Activated B cell treated with CpG ODN at 0.5 μM for 24 hours (primary cell): ENCODE measurements at regions of chr17 and their contacts with region 1.

Region 1: GRCh38 chr17:82781894-82782274 is 30.0 kb downstream of the TBCD start:
- DNase-seq: peak; percentile 85
- ATAC-seq: peak; percentile 100
- H3K4me3 Mint-ChIP-seq: no peak overlapping the region
- H3K27ac Mint-ChIP-seq: no peak overlapping the region
- H3K4me1 Mint-ChIP-seq: peaks cover 11% of the 10 kb centered on the region
- H3K27me3 Mint-ChIP-seq: no peaks in the 10 kb centered on the region
- CTCF ChIP-seq: peak; percentile 87

Region 2: GRCh38 chr17:82769041-82769440 is 12.8 kb before region 1 on chr17:
- CTCF ChIA-PET with region 1: no interaction called
- POLR2A ChIA-PET with region 1: no interaction called
- intact Hi-C with region 1: no loop called
- DNase-seq: no peak
- ATAC-seq: no peak
- H3K4me3 Mint-ChIP-seq: no peak overlapping the region
- H3K27ac Mint-ChIP-seq: no peak overlapping the region
- H3K4me1 Mint-ChIP-seq: peaks cover 2% of the 10 kb centered on the region
- H3K27me3 Mint-ChIP-seq: no peaks in the 10 kb centered on the region
- CTCF ChIP-seq: no peak

Region 3: GRCh38 chr17:82816358-82817149 is 34.7 kb after region 1 on chr17:
- CTCF ChIA-PET with region 1: interaction called, 16 read pairs
- POLR2A ChIA-PET with region 1: no interaction called
- intact Hi-C with region 1: no loop called
- DNase-seq: no peak
- ATAC-seq: no peak
- H3K4me3 Mint-ChIP-seq: no peak overlapping the region
- H3K27ac Mint-ChIP-seq: no peak overlapping the region
- H3K4me1 Mint-ChIP-seq: peaks cover 29% of the 10 kb centered on the region
- H3K27me3 Mint-ChIP-seq: no peaks in the 10 kb centered on the region
- CTCF ChIP-seq: no peak

Region 4: DNA sequence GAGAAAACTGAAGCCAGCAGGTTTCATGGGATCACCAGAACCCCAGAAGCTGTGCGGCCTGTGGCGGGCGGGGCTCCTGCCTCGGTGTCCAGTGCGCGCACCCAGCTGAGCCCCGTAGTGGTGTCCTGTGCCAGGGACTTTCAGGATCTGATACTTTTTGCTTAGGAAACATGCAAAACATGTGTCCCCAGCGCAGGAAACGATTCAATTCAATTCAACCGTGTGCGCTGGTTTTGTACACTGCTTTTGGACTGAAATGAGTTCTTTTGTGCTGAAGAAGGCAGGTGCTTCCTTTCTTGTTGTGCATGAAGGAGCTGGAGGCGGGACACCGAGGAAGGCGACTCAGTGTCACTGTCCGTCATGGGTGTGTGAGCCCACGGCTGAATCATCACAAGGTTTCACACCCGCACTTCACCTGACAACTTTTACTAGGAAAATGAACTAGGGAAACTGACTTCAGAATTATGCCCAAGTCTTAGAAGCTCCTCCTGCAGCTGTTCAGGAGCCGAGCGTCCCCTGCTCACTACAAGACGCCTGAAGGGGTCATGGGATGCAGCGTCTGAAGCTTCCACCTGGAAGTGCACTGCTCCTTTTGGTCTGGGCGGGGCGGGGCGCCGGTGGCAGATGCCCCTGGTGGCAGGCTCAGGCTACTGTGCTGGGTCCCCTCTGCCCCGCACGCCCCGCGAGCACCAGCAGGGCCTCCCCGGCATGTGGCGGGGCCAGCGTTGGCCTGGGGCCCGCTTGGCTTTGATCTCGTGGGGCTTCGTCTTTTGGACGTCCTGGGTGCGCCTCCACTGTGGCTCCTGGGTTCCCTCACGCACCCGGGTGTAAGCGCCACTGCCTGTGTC is 89.4 kb after region 1 on chr17:
- CTCF ChIA-PET with region 1: interaction called, 12 read pairs
- POLR2A ChIA-PET with region 1: interaction called, 4 read pairs
- intact Hi-C with region 1: loop called (anchors 1 kb)
- DNase-seq: peak; percentile 68
- ATAC-seq: peak; percentile 84
- H3K4me3 Mint-ChIP-seq: peak overlapping the region; percentile 75
- H3K27ac Mint-ChIP-seq: peak overlapping the region; percentile 91
- H3K4me1 Mint-ChIP-seq: peaks cover 62% of the 10 kb centered on the region
- H3K27me3 Mint-ChIP-seq: peaks cover 3% of the 10 kb centered on the region
- CTCF ChIP-seq: no peak

Region 5: DNA sequence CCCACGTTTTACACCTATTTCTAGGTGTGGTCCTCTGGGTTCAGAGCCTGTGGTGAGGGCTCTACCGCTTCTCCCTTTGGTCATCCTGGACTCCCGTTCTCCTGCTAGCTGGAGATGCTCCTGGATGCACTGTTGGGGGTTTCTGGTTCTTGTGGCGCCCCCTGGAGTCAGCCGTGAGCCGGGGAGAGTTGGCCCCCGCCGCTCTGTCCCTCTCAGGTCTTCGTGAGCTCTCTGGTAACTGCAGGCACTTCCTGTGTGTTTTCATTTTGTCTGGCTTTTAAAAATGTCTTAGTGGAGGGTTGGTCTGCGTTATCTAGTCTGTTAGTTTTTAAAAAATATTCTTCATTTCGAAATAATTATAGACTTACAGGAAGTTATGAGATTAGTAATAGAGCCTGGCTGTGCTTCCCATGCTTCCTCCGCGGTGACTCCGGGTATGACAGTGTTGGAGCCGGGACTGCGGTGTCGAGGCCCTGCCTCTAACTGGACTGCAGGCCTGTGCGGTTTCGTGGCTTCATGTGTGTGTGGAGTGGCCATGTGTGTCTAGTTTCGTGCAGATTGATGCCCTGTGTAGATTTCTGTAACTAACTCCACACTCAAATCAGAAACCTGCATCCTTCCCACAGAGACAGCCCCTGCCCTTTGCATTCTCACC is 135.9 kb after region 1 on chr17:
- CTCF ChIA-PET with region 1: interaction called, 49 read pairs
- POLR2A ChIA-PET with region 1: no interaction called
- intact Hi-C with region 1: loop called (anchors 1 kb)
- DNase-seq: no peak
- ATAC-seq: no peak
- H3K4me3 Mint-ChIP-seq: no peak overlapping the region
- H3K27ac Mint-ChIP-seq: no peak overlapping the region
- H3K4me1 Mint-ChIP-seq: peaks cover 27% of the 10 kb centered on the region
- H3K27me3 Mint-ChIP-seq: no peaks in the 10 kb centered on the region
- CTCF ChIP-seq: no peak

Region 6: DNA sequence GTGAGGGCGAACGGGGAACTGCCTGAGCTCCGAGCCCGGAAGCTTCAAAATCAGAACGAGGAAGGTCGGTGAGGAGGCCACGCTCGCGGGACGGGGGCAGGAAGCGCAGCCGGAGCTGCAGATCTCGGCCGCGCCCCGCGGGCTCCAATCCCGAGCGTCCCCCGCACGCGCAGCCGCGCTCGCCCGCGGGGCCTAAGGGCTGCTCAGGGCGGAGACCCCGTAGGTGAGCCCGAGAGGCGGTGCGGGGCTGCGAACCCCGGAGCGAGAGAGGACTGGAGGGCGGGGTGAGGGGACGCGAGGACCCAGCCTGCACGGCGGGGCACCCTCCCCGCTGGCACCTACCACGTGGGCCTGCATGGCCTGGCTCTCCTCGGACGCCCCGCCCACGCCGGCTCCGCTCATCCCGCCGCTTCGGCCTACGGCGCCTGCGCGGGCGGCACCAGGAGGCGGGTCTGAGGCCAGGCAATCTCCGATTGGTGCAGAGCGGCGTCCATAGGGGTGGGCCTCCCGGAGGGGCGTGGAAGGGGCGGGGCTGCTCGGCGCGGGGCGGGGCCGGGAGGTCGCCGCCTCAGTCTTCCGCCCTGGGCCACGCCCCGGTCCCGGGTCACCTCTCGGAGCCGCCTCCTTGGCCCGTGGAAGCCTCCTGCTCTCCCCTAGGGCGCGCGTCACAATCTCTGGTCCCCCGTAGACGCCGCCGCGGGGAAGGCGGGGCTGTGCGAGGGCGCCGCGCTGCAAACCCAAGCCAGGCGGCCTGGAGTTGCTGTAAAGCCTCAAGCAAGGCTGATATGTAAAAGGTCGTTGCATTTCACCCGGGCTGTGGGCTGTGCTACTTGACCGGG is 269.7 kb after region 1 on chr17:
- CTCF ChIA-PET with region 1: interaction called, 4 read pairs
- POLR2A ChIA-PET with region 1: no interaction called
- intact Hi-C with region 1: loop called (anchors 10 kb)
- DNase-seq: peak; percentile 97
- ATAC-seq: peak; percentile 85
- H3K4me3 Mint-ChIP-seq: peak overlapping the region; percentile 79
- H3K27ac Mint-ChIP-seq: peak overlapping the region; percentile 78
- H3K4me1 Mint-ChIP-seq: peaks cover 31% of the 10 kb centered on the region
- H3K27me3 Mint-ChIP-seq: no peaks in the 10 kb centered on the region
- CTCF ChIP-seq: no peak